ENCODE measurements at regions of chr20 and their contacts with region 1.

Region 1: GRCh38 chr20:9359561-9360308 is 154.7 kb upstream of the LAMP5 start:
- DNase-seq: peak; percentile 24 to 62
- ATAC-seq: peak; percentile 38 to 81 (median 70)
- H3K4me3 ChIP-seq: no peak overlapping the region
- H3K27ac ChIP-seq: peak overlapping the region in 5 of 10 donors; percentile 14 to 50 (median 17)
- H3K4me1 ChIP-seq: peaks cover 0 to 23% (median 10%) of the 10 kb centered on the region in 9 donors
- H3K27me3 ChIP-seq: no peaks in the 10 kb centered on the region
- CTCF ChIP-seq: peak; percentile 35 to 78 (median 61)

Region 2: DNA sequence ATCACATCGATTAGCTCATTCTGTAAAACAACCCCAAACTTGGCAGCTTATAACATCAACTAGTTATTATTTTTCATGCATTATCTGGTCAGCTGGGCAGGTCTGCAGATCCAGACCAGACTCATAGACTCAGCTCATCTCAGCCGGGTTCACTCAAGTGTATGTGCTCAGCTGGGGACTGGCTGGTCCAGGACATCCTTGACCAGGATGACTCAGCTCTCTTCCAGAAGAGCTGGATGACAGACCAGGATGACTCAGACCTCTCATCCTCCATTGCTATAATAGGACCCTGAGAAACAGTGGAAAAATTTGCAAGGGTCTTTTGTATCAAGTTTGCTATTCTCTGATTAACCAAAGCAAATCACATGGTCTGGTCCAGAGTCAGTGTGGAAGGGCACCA is 603.3 kb before region 1 on chr20:
- intact Hi-C with region 1: loop called in 3 of 10 experiments (anchors 10 kb)
- DNase-seq: peak in 1 of 2 donors; percentile 5
- ATAC-seq: peak in 4 of 8 donors; percentile 37 to 91 (median 64)
- H3K4me3 ChIP-seq: no peak overlapping the region
- H3K27ac ChIP-seq: no peak overlapping the region
- H3K4me1 ChIP-seq: peaks cover 0 to 11% (median 0%) of the 10 kb centered on the region in 9 donors
- H3K27me3 ChIP-seq: no peaks in the 10 kb centered on the region
- CTCF ChIP-seq: no peak

Region 3: GRCh38 chr20:8790442-8791074 is 569.2 kb before region 1 on chr20:
- intact Hi-C with region 1: loop called (anchors 2 to 10 kb)
- DNase-seq: peak in 1 of 2 donors; percentile 19
- ATAC-seq: no peak
- H3K4me3 ChIP-seq: no peak overlapping the region
- H3K27ac ChIP-seq: no peak overlapping the region
- H3K4me1 ChIP-seq: peaks cover 0 to 10% (median 3%) of the 10 kb centered on the region in 9 donors
- H3K27me3 ChIP-seq: no peaks in the 10 kb centered on the region
- CTCF ChIP-seq: peak; percentile 91 to 98 (median 94)

Region 4: DNA sequence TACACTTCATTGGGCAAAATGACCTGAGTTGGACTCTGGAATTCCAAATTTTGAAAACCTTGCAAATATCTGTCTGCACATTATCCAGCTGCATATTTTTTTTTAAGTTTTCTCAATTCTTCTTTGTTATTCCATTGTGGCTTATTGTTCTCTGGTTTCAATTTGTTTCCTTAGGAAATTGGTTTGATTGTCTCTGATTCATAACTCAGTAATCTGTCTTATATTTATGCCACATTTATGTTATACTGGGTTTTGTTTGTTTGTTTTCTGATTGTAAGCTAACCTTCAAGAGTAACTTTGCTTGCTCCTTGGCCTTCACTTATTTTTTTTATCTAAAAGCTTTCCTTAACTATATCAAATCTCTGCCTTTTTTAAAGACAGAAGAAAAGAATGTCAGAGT is 484.1 kb before region 1 on chr20:
- intact Hi-C with region 1: no loop called
- DNase-seq: no peak
- ATAC-seq: no peak
- H3K4me3 ChIP-seq: no peak overlapping the region
- H3K27ac ChIP-seq: no peak overlapping the region
- H3K4me1 ChIP-seq: no peaks in the 10 kb centered on the region
- H3K27me3 ChIP-seq: no peaks in the 10 kb centered on the region
- CTCF ChIP-seq: no peak

Region 5: GRCh38 chr20:9068851-9069663 is 290.7 kb before region 1 on chr20 and contains the start of gene PLCB4:
- intact Hi-C with region 1: loop called in 6 of 10 experiments (anchors 5 to 10 kb)
- DNase-seq: peak; percentile 51 to 52
- ATAC-seq: peak; percentile 18 to 69 (median 48)
- H3K4me3 ChIP-seq: peak within 1 kb of the TSS; percentile 70 to 97 (median 91)
- H3K27ac ChIP-seq: peak within 1 kb of the TSS; percentile 80 to 99 (median 94)
- H3K4me1 ChIP-seq: peaks cover 2 to 55% (median 38%) of the 10 kb centered on the region in 9 donors
- H3K27me3 ChIP-seq: peaks cover 0 to 25% (median 0%) of the 10 kb centered on the region in 7 donors
- CTCF ChIP-seq: no peak
- total RNA-seq, gene PLCB4: 16.2 to 33.3 (median 29.4) TPM

Region 6: DNA sequence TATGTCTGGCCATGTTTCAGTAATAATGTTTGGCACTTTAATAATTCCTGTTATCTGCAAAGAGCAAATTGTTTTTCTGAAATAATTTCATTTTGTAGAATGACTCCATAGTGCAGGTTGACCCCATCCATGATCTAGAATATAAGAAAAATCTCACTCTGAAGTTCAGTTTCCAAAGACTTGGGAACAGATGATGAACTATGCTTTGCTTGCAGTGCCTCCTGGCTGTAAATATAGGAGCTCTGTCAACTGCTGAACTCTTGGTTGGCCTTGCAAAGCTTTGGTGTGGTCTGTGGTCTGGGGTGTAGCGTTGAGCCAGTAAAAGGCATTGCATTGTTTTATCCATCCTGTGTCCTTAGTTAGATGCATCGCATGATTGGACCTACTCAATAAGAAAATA is 186.9 kb before region 1 on chr20:
- intact Hi-C with region 1: loop called in 2 of 10 experiments (anchors 10 kb)
- DNase-seq: no peak
- ATAC-seq: peak; percentile 13 to 76 (median 58)
- H3K4me3 ChIP-seq: no peak overlapping the region
- H3K27ac ChIP-seq: peak overlapping the region in 2 of 10 donors; percentile 23 to 45
- H3K4me1 ChIP-seq: peaks cover 4 to 41% (median 24%) of the 10 kb centered on the region in 9 donors
- H3K27me3 ChIP-seq: no peaks in the 10 kb centered on the region
- CTCF ChIP-seq: peak in 8 of 9 donors; percentile 20 to 68 (median 44)

Region 7: GRCh38 chr20:9220874-9221547 is 138.7 kb before region 1 on chr20:
- intact Hi-C with region 1: loop called in 2 of 10 experiments (anchors 10 kb)
- DNase-seq: peak in 1 of 2 donors; percentile 16
- ATAC-seq: no peak
- H3K4me3 ChIP-seq: no peak overlapping the region
- H3K27ac ChIP-seq: no peak overlapping the region
- H3K4me1 ChIP-seq: peaks cover 4 to 70% (median 38%) of the 10 kb centered on the region in 9 donors
- H3K27me3 ChIP-seq: no peaks in the 10 kb centered on the region
- CTCF ChIP-seq: no peak

Region 8: GRCh38 chr20:9520086-9520485 is 160.4 kb after region 1 on chr20:
- intact Hi-C with region 1: no loop called
- DNase-seq: no peak
- ATAC-seq: no peak
- H3K4me3 ChIP-seq: no peak overlapping the region
- H3K27ac ChIP-seq: no peak overlapping the region
- H3K4me1 ChIP-seq: peaks cover 0 to 20% (median 17%) of the 10 kb centered on the region in 9 donors
- H3K27me3 ChIP-seq: peaks cover 6 to 80% (median 62%) of the 10 kb centered on the region in 7 donors
- CTCF ChIP-seq: no peak